Activated naive CD4-positive, alpha-beta T cell treated with anti-CD3 and anti-CD28 coated beads for 36 hours (primary cell): ENCODE measurements at regions of chr7 and their contacts with region 1.

Region 1: GRCh38 chr7:142301923-142302550 is 44.2 kb upstream of the PRSS58 start:
- DNase-seq: no peak
- H3K4me3 Mint-ChIP-seq: no peak overlapping the region
- H3K27ac Mint-ChIP-seq: no peak overlapping the region
- H3K4me1 Mint-ChIP-seq: peaks cover 30% of the 10 kb centered on the region
- H3K27me3 Mint-ChIP-seq: peaks cover 11% of the 10 kb centered on the region

Region 2: GRCh38 chr7:141665208-141666035 is 636.6 kb before region 1 on chr7:
- CTCF ChIA-PET with region 1: no interaction called
- intact Hi-C with region 1: no loop called
- DNase-seq: no peak
- H3K4me3 Mint-ChIP-seq: no peak overlapping the region
- H3K27ac Mint-ChIP-seq: peak overlapping the region; percentile 11
- H3K4me1 Mint-ChIP-seq: peaks cover 7% of the 10 kb centered on the region
- H3K27me3 Mint-ChIP-seq: no peaks in the 10 kb centered on the region

Region 3: GRCh38 chr7:141975806-141976523 is 326.1 kb before region 1 on chr7:
- CTCF ChIA-PET with region 1: interaction called, 41 read pairs
- intact Hi-C with region 1: loop called (anchors 1 kb)
- DNase-seq: peak; percentile 88
- H3K4me3 Mint-ChIP-seq: peak overlapping the region; percentile 76
- H3K27ac Mint-ChIP-seq: peak overlapping the region; percentile 28
- H3K4me1 Mint-ChIP-seq: peaks cover 18% of the 10 kb centered on the region
- H3K27me3 Mint-ChIP-seq: no peaks in the 10 kb centered on the region

Region 4: DNA sequence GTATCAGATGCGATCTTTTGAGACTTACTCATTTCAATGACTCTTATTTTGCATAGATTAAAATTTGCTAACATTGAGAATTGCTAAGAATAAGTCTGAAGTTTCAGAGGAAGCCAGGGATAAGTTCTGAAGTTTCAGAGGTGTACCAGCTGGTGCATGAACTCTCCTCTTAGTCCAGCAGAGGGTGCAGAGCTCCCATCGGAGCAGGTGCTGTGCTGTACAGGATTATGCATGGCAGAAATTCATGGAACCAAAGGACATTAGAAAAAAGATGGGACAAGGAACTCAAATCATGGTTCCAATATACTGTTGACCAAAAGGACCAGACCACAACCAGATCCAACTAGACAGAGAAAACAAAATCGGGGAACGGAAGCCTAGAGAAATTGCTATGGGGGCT is 148.6 kb before region 1 on chr7:
- CTCF ChIA-PET with region 1: no interaction called
- intact Hi-C with region 1: loop called (anchors 1 kb)
- DNase-seq: no peak
- H3K4me3 Mint-ChIP-seq: no peak overlapping the region
- H3K27ac Mint-ChIP-seq: no peak overlapping the region
- H3K4me1 Mint-ChIP-seq: no peaks in the 10 kb centered on the region
- H3K27me3 Mint-ChIP-seq: no peaks in the 10 kb centered on the region

Region 5: GRCh38 chr7:142248166-142249160 is 53.6 kb before region 1 on chr7:
- CTCF ChIA-PET with region 1: no interaction called
- intact Hi-C with region 1: no loop called
- DNase-seq: no peak
- H3K4me3 Mint-ChIP-seq: no peak overlapping the region
- H3K27ac Mint-ChIP-seq: no peak overlapping the region
- H3K4me1 Mint-ChIP-seq: no peaks in the 10 kb centered on the region
- H3K27me3 Mint-ChIP-seq: peaks cover 2% of the 10 kb centered on the region

Region 6: DNA sequence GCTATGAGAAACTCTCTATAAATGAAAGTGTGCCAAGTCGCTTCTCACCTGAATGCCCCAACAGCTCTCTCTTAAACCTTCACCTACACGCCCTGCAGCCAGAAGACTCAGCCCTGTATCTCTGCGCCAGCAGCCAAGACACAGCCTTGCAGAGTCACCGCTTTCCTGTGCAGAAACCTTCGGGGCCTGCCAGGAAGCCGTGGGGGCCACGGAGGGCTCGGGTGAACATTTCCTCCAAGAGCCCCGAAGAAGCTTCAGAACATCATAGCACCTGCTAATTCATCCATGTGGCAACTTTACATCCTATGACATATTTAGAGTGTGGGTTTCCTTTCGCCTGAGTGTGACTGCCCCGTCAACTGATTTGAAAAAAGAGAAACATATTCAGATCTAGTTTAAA is 11.5 kb after region 1 on chr7:
- CTCF ChIA-PET with region 1: interaction called, 113 read pairs
- intact Hi-C with region 1: loop called (anchors 1 kb)
- DNase-seq: peak; percentile 72
- H3K4me3 Mint-ChIP-seq: peak overlapping the region; percentile 55
- H3K27ac Mint-ChIP-seq: peak overlapping the region; percentile 63
- H3K4me1 Mint-ChIP-seq: peaks cover 13% of the 10 kb centered on the region
- H3K27me3 Mint-ChIP-seq: peaks cover 5% of the 10 kb centered on the region

Region 7: DNA sequence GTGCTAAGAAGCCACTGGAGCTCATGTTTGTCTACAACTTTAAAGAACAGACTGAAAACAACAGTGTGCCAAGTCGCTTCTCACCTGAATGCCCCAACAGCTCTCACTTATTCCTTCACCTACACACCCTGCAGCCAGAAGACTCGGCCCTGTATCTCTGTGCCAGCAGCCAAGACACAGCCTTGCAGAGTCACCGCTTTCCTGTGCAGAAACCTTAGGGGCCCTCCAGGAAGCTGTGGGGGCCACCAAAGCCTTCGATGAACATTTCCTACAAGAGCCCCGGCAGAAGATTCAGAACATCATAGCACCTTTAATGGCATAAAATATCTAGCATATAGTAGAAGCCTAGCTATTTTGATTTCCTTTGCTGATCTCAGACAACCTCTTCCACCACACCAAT is 43.8 kb after region 1 on chr7:
- CTCF ChIA-PET with region 1: interaction called, 17 read pairs
- intact Hi-C with region 1: no loop called
- DNase-seq: peak; percentile 73
- H3K4me3 Mint-ChIP-seq: peak overlapping the region; percentile 41
- H3K27ac Mint-ChIP-seq: peak overlapping the region; percentile 59
- H3K4me1 Mint-ChIP-seq: peaks cover 21% of the 10 kb centered on the region
- H3K27me3 Mint-ChIP-seq: peaks cover 2% of the 10 kb centered on the region

Region 8: GRCh38 chr7:142352543-142352942 is 50.5 kb after region 1 on chr7:
- CTCF ChIA-PET with region 1: interaction called, 13 read pairs
- intact Hi-C with region 1: no loop called
- DNase-seq: peak; percentile 52
- H3K4me3 Mint-ChIP-seq: peak overlapping the region; percentile 74
- H3K27ac Mint-ChIP-seq: peak overlapping the region; percentile 73
- H3K4me1 Mint-ChIP-seq: peaks cover 30% of the 10 kb centered on the region
- H3K27me3 Mint-ChIP-seq: no peaks in the 10 kb centered on the region

Region 9: GRCh38 chr7:142357953-142358520 is 56.0 kb after region 1 on chr7:
- CTCF ChIA-PET with region 1: interaction called, 5 read pairs
- intact Hi-C with region 1: loop called (anchors 2 kb)
- DNase-seq: peak; percentile 59
- H3K4me3 Mint-ChIP-seq: peak overlapping the region; percentile 29
- H3K27ac Mint-ChIP-seq: no peak overlapping the region
- H3K4me1 Mint-ChIP-seq: peaks cover 38% of the 10 kb centered on the region
- H3K27me3 Mint-ChIP-seq: no peaks in the 10 kb centered on the region

Region 10: GRCh38 chr7:142943706-142944268 is 641.8 kb after region 1 on chr7:
- CTCF ChIA-PET with region 1: no interaction called
- intact Hi-C with region 1: no loop called
- DNase-seq: no peak
- H3K4me3 Mint-ChIP-seq: no peak overlapping the region
- H3K27ac Mint-ChIP-seq: no peak overlapping the region
- H3K4me1 Mint-ChIP-seq: no peaks in the 10 kb centered on the region
- H3K27me3 Mint-ChIP-seq: peaks cover 3% of the 10 kb centered on the region